MCF 10A (cell line): ENCODE measurements at regions of chr14 and their contacts with region 1.

Region 1: GRCh38 chr14:32560209-32560857 is 231.2 kb downstream of the AKAP6 start:
- DNase-seq: peak; percentile 85
- H3K4me3 Mint-ChIP-seq: no peak overlapping the region
- H3K27ac Mint-ChIP-seq: no peak overlapping the region
- H3K4me1 Mint-ChIP-seq: peaks cover 10% of the 10 kb centered on the region
- H3K27me3 Mint-ChIP-seq: no peaks in the 10 kb centered on the region
- CTCF ChIP-seq: peak; percentile 77

Region 2: GRCh38 chr14:31819304-31819703 is 741.0 kb before region 1 on chr14:
- CTCF ChIA-PET with region 1: no interaction called
- POLR2A ChIA-PET with region 1: no interaction called
- intact Hi-C with region 1: no loop called
- DNase-seq: no peak
- H3K4me3 Mint-ChIP-seq: no peak overlapping the region
- H3K27ac Mint-ChIP-seq: peak overlapping the region; percentile 53
- H3K4me1 Mint-ChIP-seq: peaks cover 16% of the 10 kb centered on the region
- H3K27me3 Mint-ChIP-seq: no peaks in the 10 kb centered on the region
- CTCF ChIP-seq: no peak

Region 3: GRCh38 chr14:32259368-32260013 is 300.8 kb before region 1 on chr14:
- CTCF ChIA-PET with region 1: interaction called, 9 read pairs
- POLR2A ChIA-PET with region 1: interaction called, 5 read pairs
- intact Hi-C with region 1: loop called (anchors 1 kb)
- DNase-seq: peak; percentile 73
- H3K4me3 Mint-ChIP-seq: no peak overlapping the region
- H3K27ac Mint-ChIP-seq: peak overlapping the region; percentile 14
- H3K4me1 Mint-ChIP-seq: peaks cover 11% of the 10 kb centered on the region
- H3K27me3 Mint-ChIP-seq: no peaks in the 10 kb centered on the region
- CTCF ChIP-seq: no peak